Panc1 (cell line): ENCODE measurements at regions of chr9 and their contacts with region 1.

Region 1: DNA sequence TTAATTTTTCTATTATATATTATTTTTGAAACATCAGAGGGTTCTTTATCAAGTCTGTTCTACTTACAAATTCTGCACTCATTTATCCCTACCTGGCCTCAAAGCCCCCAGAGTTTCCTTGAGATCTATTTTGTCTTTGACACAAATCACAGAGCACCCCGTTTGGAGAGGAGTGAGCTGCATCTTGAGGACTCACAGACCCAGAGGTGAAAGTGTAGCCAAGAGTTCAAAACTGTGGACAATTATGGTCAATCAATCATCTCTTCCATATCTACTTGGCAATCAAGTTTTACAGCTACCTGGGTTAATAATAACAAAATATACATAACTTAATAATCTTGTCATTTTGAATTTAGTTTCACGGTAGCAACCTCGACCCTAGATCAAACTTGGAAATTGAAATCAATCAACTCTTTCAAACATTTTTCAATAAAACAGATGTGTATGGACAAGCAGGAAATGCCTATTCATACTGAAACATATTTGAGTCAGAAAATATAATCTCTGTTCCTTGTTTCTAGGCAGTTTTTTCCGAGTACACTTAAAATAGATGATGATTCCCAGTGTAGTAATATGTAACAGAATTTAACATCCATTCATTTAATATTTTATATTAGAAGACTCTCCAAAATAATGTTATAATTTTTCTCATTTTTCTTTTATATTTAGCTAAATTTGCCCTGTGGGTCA is 13.7 kb upstream of the SYK start:
- DNase-seq: no peak
- ATAC-seq: no peak
- H3K4me3 ChIP-seq: no peak overlapping the region
- H3K27ac ChIP-seq: no peak overlapping the region
- H3K4me1 ChIP-seq: no peaks in the 10 kb centered on the region
- H3K27me3 ChIP-seq: no peaks in the 10 kb centered on the region
- CTCF ChIP-seq: no peak

Region 2: GRCh38 chr9:90175257-90175656 is 612.7 kb before region 1 on chr9:
- CTCF ChIA-PET with region 1: no interaction called
- POLR2A ChIA-PET with region 1: interaction called, 13 read pairs
- in situ Hi-C with region 1: no loop called
- intact Hi-C with region 1: no loop called
- DNase-seq: no peak
- ATAC-seq: no peak
- H3K4me3 ChIP-seq: no peak overlapping the region
- H3K27ac ChIP-seq: no peak overlapping the region
- H3K4me1 ChIP-seq: no peaks in the 10 kb centered on the region
- H3K27me3 ChIP-seq: no peaks in the 10 kb centered on the region
- CTCF ChIP-seq: no peak